MCF 10A (cell line): ENCODE measurements at regions of chr12 and their contacts with region 1.

Region 1: GRCh38 chr12:29088611-29089219 is 60.4 kb upstream of the FAR2 start:
- DNase-seq: peak; percentile 25
- H3K4me3 Mint-ChIP-seq: no peak overlapping the region
- H3K27ac Mint-ChIP-seq: no peak overlapping the region
- H3K4me1 Mint-ChIP-seq: no peaks in the 10 kb centered on the region
- H3K27me3 Mint-ChIP-seq: peaks cover 15% of the 10 kb centered on the region
- CTCF ChIP-seq: peak; percentile 34

Region 2: GRCh38 chr12:29073628-29074239 is 15.0 kb before region 1 on chr12:
- CTCF ChIA-PET with region 1: interaction called, 21 read pairs
- POLR2A ChIA-PET with region 1: interaction called, 3 read pairs
- intact Hi-C with region 1: no loop called
- DNase-seq: peak; percentile 49
- H3K4me3 Mint-ChIP-seq: no peak overlapping the region
- H3K27ac Mint-ChIP-seq: no peak overlapping the region
- H3K4me1 Mint-ChIP-seq: no peaks in the 10 kb centered on the region
- H3K27me3 Mint-ChIP-seq: peaks cover 40% of the 10 kb centered on the region
- CTCF ChIP-seq: peak; percentile 62

Region 3: GRCh38 chr12:29317556-29318363 is 229.0 kb after region 1 on chr12:
- CTCF ChIA-PET with region 1: interaction called, 10 read pairs
- POLR2A ChIA-PET with region 1: interaction called, 9 read pairs
- intact Hi-C with region 1: loop called (anchors 1 kb)
- DNase-seq: peak; percentile 57
- H3K4me3 Mint-ChIP-seq: no peak overlapping the region
- H3K27ac Mint-ChIP-seq: no peak overlapping the region
- H3K4me1 Mint-ChIP-seq: peaks cover 5% of the 10 kb centered on the region
- H3K27me3 Mint-ChIP-seq: no peaks in the 10 kb centered on the region
- CTCF ChIP-seq: peak; percentile 33